Natural killer cell (primary cell): ENCODE measurements at regions of chr5 and their contacts with region 1.

Region 1: DNA sequence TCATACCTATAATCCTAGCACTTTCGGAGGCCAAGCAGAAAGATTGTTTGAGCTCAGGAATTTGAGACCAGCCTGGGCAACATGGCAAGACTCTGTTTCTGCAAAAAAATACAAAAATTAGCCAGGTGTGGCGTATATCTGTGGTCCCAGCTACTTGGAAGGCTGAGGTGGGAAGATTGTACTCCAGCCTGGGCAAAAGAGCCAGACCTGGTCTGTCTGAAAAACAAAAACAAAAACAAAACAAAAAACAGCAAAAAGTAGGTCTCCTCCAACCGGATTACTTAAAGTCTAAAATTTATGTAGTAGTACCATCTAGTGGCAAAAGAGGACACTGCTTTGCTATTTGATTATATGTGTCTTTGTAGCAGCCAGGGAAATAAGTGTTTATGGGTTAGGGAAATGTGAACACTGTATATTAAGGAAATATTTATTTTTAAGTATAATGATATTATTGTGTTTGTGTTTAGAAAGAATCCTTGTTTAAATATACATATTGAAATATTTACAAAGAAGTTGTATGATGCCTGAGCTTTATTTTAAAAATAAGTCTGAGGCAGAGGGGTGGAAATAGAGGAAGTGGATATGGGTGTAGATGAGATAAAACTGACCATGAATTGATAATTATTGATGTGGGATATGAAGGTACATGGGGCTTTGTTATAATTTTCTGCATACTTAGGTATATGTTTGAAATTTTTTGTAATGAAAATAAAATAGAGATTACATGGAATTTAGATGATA is 20.0 kb downstream of the APC start:
- DNase-seq: peak in 1 of 2 donors; percentile 77
- ATAC-seq: peak; percentile 83 to 95 (median 90)
- H3K4me3 ChIP-seq: no peak overlapping the region
- H3K4me3 Mint-ChIP-seq: no peak overlapping the region
- H3K27ac ChIP-seq: peak overlapping the region; percentile 1
- H3K27ac Mint-ChIP-seq: peak overlapping the region; percentile 29 to 45
- H3K4me1 ChIP-seq: no peaks in the 10 kb centered on the region
- H3K4me1 Mint-ChIP-seq: peaks cover 9 to 15% of the 10 kb centered on the region in 2 donors
- H3K27me3 ChIP-seq: no peaks in the 10 kb centered on the region
- H3K27me3 Mint-ChIP-seq: no peaks in the 10 kb centered on the region
- CTCF ChIP-seq: peak; percentile 92

Region 2: GRCh38 chr5:112691758-112692157 is 65.9 kb before region 1 on chr5:
- intact Hi-C with region 1: loop called (anchors 1 kb)
- DNase-seq: peak in 1 of 2 donors; percentile 79
- ATAC-seq: peak in 2 of 3 donors; percentile 45 to 61
- H3K4me3 ChIP-seq: no peak overlapping the region
- H3K4me3 Mint-ChIP-seq: no peak overlapping the region
- H3K27ac ChIP-seq: no peak overlapping the region
- H3K27ac Mint-ChIP-seq: no peak overlapping the region
- H3K4me1 ChIP-seq: no peaks in the 10 kb centered on the region
- H3K4me1 Mint-ChIP-seq: no peaks in the 10 kb centered on the region
- H3K27me3 ChIP-seq: peaks cover 5% of the 10 kb centered on the region
- H3K27me3 Mint-ChIP-seq: peaks cover 29 to 73% of the 10 kb centered on the region in 2 donors
- CTCF ChIP-seq: no peak